ENCODE measurements at regions of chr18 and their contacts with region 1.

Region 1: GRCh38 chr18:58761241-58761969 is 90.1 kb downstream of the MALT1 start:
- DNase-seq: no peak
- H3K4me3 ChIP-seq: no peak overlapping the region
- H3K27ac ChIP-seq: no peak overlapping the region
- H3K27me3 ChIP-seq: peaks cover 12% of the 10 kb centered on the region
- CTCF ChIP-seq: no peak

Region 2: DNA sequence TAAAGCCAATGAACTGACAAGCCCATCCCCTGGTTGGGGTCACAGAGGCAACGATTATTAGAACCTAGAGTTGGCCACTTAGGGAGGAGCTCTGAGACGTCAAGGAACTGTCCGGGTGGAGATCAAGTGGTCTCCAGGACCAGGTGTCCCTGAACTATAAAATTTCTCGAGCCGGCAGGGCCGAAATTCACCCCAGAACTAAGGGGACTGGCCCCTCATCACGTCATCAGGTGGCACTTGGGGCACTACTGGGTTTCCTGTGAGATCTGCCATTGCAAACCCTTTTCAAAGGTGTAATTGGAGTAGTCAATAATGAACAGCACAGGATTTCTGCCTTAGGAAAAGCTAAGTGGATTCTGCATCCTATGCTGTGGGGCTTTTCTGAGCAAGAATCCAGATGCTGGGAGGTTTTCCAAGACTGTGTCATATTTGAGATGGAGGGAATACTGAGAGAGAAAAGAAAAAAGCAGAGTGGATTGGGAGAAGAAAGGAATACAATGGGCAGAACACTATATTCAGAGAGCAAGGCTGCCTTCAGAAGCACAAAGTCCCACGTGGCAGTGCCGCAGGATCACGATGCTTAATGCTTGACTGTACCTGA is 246.1 kb before region 1 on chr18:
- CTCF ChIA-PET with region 1: interaction called, 22 read pairs
- POLR2A ChIA-PET with region 1: no interaction called
- DNase-seq: no peak
- H3K4me3 ChIP-seq: no peak overlapping the region
- H3K27ac ChIP-seq: no peak overlapping the region
- H3K27me3 ChIP-seq: no peaks in the 10 kb centered on the region
- CTCF ChIP-seq: no peak

Region 3: DNA sequence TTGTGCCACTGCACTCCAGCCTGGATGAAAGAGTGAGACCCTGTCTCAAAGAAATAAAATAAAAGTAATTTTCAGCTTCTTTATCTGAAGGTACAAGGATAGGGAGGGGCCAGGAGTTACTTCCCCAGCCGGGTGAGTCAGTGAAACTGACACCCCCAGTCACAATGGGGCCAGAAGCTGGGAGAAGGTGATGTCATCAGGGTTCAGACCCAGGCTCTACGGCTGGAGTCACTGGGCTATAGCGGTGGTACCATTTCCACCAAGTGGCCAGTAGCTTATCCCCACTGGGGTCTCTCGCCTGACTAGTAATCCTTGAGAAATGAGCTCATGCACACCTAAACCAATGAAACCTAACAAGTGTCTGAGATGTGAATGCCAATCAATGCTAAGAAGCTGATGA is 240.4 kb before region 1 on chr18:
- CTCF ChIA-PET with region 1: interaction called, 22 read pairs
- POLR2A ChIA-PET with region 1: no interaction called
- DNase-seq: no peak
- H3K4me3 ChIP-seq: no peak overlapping the region
- H3K27ac ChIP-seq: no peak overlapping the region
- H3K27me3 ChIP-seq: no peaks in the 10 kb centered on the region
- CTCF ChIP-seq: no peak

Region 4: DNA sequence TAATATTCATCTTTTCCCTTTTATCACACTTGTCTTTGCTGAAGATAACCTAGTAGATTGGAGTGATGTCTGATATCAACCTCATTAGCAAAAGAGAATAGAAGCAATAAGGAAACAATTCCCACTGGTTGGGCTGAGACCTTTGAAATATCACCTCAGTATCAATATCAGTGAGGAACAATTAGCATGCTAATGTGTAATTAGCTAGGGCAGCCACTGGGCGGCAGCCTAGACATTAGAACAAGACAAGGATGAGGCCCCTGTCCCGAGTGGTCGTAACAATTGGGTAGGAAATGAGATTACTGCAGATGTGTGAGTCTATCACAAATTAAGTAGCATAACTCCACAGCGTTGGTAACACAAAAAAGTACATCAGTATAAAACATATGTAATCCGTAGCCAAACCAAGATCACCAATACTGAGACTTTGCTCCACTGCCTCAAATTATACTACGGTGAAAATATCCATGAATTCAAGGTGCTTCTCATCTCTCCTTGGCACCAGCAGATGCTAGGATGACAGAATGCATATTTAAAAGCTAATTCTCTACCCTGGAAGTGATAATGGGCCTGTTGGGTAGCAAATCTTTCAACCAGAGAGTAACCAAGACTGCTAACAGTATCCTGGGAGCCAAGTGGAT is 231.6 kb before region 1 on chr18:
- CTCF ChIA-PET with region 1: interaction called, 116 read pairs
- POLR2A ChIA-PET with region 1: no interaction called
- DNase-seq: peak; percentile 24
- H3K4me3 ChIP-seq: no peak overlapping the region
- H3K27ac ChIP-seq: no peak overlapping the region
- H3K27me3 ChIP-seq: no peaks in the 10 kb centered on the region
- CTCF ChIP-seq: peak; percentile 87

Region 5: DNA sequence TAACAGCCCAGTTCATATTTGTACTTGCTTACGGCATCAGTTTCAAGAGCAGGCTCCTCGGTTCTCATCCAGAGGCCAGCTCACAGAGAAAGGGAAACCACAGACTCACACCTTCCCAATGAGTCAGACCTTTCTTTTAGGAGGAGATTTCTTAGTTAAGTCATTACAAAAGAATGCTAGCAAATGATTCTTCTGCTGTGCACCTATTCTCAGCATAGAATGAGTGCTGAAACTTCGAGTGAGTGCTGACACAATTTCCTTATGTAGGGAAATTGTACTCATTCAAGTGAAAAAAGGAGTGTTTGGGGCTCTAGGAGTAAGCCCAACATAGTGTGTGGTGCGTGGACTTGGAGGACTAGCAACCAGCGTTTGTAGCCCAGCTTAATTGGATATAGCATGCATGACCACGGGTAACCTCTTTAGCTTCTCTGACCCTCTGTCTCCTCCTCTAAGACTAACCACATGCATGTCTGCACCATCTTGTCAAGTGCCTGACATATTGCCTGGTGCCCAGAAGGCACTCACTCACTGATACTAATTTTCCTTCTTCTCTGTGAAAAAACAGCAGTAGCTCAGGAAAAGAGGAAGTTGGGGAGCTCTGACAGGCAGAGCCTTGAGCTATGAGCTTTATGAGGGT is 219.5 kb before region 1 on chr18:
- CTCF ChIA-PET with region 1: interaction called, 20 read pairs
- POLR2A ChIA-PET with region 1: no interaction called
- DNase-seq: peak; percentile 95
- H3K4me3 ChIP-seq: no peak overlapping the region
- H3K27ac ChIP-seq: peak overlapping the region; percentile 90
- H3K27me3 ChIP-seq: no peaks in the 10 kb centered on the region
- CTCF ChIP-seq: no peak

Region 6: GRCh38 chr18:58937071-58937886 is 175.9 kb after region 1 on chr18:
- CTCF ChIA-PET with region 1: no interaction called
- POLR2A ChIA-PET with region 1: no interaction called
- DNase-seq: no peak
- H3K4me3 ChIP-seq: no peak overlapping the region
- H3K27ac ChIP-seq: no peak overlapping the region
- H3K27me3 ChIP-seq: no peaks in the 10 kb centered on the region
- CTCF ChIP-seq: no peak

Region 7: GRCh38 chr18:59272971-59273935 is 511.8 kb after region 1 on chr18 and contains the start of gene RAX:
- CTCF ChIA-PET with region 1: no interaction called
- POLR2A ChIA-PET with region 1: no interaction called
- DNase-seq: no peak
- H3K4me3 ChIP-seq: 0 out of 2 replicates have a peak within 1 kb of the TSS, but pooled peaks have one; percentile 20
- H3K27ac ChIP-seq: no peak within 1 kb of the TSS
- H3K27me3 ChIP-seq: peaks cover 93% of the 10 kb centered on the region
- CTCF ChIP-seq: no peak; the same call in 1 of the 2 replicates
- polyA plus RNA-seq, gene RAX: not detected in 2 replicates